ENCODE measurements at regions of chrX and their contacts with region 1.

Region 1: GRCh38 chrX:122004127-122004526 is 956.7 kb downstream of the GLUD2 start:
- DNase-seq: no peak
- ATAC-seq: no peak
- H3K4me3 ChIP-seq: no peak overlapping the region
- H3K27ac ChIP-seq: no peak overlapping the region
- H3K4me1 ChIP-seq: no peaks in the 10 kb centered on the region
- H3K27me3 ChIP-seq: no peaks in the 10 kb centered on the region
- CTCF ChIP-seq: no peak

Region 2: GRCh38 chrX:121975671-121976070 is 28.5 kb before region 1 on chrX:
- CTCF ChIA-PET with region 1: no interaction called
- POLR2A ChIA-PET with region 1: interaction called, 14 read pairs
- in situ Hi-C with region 1: no loop called
- intact Hi-C with region 1: no loop called
- DNase-seq: no peak
- ATAC-seq: no peak
- H3K4me3 ChIP-seq: no peak overlapping the region
- H3K27ac ChIP-seq: no peak overlapping the region
- H3K4me1 ChIP-seq: no peaks in the 10 kb centered on the region
- H3K27me3 ChIP-seq: no peaks in the 10 kb centered on the region
- CTCF ChIP-seq: no peak

Measured in Panc1 (cell line).